ENCODE measurements at regions of chr6 and their contacts with region 1.

Region 1: DNA sequence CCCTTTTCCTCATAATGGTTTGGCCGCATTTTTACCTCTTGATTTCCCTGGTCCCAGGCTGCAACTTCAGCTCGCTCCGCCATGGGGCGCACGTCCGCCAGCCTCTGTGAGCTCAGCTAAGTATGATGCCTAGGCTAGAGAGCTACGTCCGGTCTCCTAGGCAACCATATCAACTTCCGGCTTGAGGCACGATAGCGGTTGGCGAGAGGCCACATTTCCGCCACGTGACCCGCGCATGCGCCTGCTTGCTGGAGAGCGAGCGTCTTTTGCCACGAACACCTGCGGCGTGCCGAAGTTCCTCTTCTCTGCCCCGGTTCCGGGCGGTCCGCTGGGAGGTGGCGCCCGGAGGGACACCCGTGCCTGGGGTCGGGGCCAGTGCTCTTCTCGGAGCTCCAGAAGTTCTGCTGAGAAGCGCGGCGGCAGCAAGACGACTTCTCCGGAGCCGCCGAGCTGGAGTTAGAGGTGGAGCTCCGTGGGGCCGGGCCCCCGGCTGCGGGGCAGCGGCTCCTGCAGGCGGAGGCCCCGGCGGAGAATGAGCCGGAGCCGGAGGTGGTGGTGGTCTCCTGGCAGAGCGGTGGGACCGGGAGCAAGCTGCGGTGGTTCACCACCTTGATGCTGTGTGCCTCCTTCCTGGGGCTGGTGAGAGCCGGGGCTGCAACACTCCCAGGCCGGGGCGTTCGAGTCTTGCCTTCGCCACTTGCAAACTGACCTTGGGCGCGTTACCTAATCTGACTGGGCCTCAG is 172.0 kb downstream of the SLC16A10 start:
- DNase-seq: peak; percentile 100

Region 2: DNA sequence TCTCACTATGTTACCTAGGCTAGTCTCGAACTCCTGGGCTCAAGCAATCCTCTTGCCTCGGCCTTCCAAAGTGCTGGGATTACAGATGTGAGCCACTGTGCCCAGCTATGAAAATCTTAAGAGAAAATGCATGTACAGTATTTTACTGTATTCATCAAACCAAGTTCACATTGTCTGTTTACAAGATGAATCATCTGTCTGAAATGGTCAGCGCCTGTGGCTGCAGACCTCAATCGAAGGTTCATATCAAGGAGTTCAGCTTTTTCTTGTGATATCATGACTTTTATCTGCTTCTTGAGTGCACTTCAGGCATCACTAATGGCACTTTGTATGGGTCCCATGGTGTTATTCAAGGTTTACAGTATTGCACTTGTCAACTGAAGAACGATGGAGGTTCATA is 16.8 kb before region 1 on chr6:
- intact Hi-C with region 1: no loop called
- DNase-seq: no peak

Region 3: DNA sequence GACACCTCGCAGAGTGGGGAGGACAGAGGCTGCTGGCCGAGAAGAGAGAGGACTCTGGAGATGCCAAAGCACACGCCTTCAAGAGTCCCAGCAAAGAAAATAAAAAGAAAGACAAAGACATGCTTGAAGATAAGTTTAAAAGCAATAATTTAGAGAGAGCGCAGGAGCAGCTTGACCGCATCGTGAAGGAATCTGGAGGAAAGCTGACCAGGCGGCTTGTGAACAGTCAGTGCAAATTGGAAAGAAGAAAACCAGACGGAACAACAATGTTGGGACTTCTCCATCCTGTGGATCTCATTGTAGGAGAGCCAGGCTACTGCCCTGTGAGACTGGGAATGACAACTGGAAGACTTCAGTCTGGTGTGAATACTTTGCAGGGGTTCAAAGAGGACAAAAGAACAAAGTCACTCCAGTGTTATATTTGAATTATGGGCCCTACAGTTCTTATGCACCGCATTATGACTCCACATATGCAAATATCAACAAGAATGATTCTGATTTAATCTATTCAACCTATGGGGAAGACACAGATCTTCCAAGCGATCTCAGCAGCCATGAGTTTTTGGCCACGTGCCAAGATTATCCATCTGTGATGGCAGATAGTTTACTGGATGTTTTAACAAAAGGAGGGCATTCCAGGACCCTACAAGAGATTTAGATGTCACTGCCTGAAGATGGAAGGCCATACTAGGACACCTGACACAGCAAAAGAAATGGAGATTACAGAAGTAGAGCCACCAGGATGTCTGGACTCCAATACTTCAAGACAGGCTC is 171.5 kb after region 1 on chr6:
- intact Hi-C with region 1: no loop called
- DNase-seq: no peak

Region 4: GRCh38 chr6:111631903-111632460 is 372.7 kb after region 1 on chr6:
- intact Hi-C with region 1: loop called in 1 of 2 experiments (anchors 5 kb)
- DNase-seq: no peak

Region 5: GRCh38 chr6:111642463-111643158 is 383.4 kb after region 1 on chr6:
- intact Hi-C with region 1: loop called in 1 of 2 experiments (anchors 10 kb)
- DNase-seq: no peak

Measured in posterior vena cava (tissue), 2 donors.